ENCODE measurements at regions of chr21 and their contacts with region 1.

Region 1: GRCh38 chr21:39238275-39238674 is 55.0 kb upstream of the PSMG1 start:
- DNase-seq: no peak
- H3K4me3 ChIP-seq: no peak overlapping the region
- H3K27ac ChIP-seq: no peak overlapping the region
- H3K4me1 ChIP-seq: no peaks in the 10 kb centered on the region
- H3K27me3 ChIP-seq: no peaks in the 10 kb centered on the region
- CTCF ChIP-seq: no peak

Region 2: DNA sequence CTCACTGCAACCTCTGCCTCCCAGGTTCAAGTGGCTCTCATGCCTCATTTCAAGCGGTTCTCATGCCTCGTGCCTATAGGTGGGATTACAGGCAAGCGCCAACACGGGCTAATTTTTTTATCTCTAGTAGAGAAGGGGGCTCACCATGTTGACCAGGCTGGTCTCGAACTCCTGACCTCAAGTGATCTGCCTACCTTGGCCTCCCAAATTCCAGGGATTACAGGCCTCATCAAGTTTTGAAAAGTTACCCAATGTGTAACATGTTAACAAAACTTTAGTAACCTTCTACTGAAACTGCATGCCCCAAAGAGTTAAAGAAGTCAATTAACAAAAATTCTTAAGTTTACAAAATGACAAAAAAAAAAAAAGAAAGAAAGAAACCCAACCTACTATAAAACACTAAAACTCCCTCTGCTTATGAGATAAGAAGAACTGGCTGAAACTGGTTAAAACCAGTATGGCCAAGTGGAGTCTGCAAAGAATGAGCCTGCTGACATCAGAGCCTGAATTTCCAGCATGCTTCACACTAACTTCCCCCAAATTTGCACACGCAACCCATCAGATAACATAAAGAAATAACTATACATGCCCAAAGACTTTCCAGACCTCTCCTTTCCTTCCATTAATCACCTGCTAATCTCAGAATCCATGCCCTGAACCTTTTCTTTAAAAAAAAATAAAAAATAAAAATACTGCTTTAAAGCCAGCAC is 29.5 kb before region 1 on chr21:
- CTCF ChIA-PET with region 1: no interaction called
- POLR2A ChIA-PET with region 1: interaction called, 14 read pairs
- intact Hi-C with region 1: no loop called
- DNase-seq: peak; percentile 15
- H3K4me3 ChIP-seq: no peak overlapping the region
- H3K27ac ChIP-seq: no peak overlapping the region
- H3K4me1 ChIP-seq: peaks cover 4% of the 10 kb centered on the region
- H3K27me3 ChIP-seq: no peaks in the 10 kb centered on the region
- CTCF ChIP-seq: no peak

Region 3: GRCh38 chr21:40567501-40567900 is 1329.2 kb after region 1 on chr21:
- CTCF ChIA-PET with region 1: no interaction called
- POLR2A ChIA-PET with region 1: no interaction called
- intact Hi-C with region 1: no loop called
- DNase-seq: no peak
- H3K4me3 ChIP-seq: no peak overlapping the region
- H3K27ac ChIP-seq: no peak overlapping the region
- H3K4me1 ChIP-seq: no peaks in the 10 kb centered on the region
- H3K27me3 ChIP-seq: no peaks in the 10 kb centered on the region
- CTCF ChIP-seq: no peak

Measured in A673 (cell line).